ENCODE measurements at regions of chr2 and their contacts with region 1.

Region 1: DNA sequence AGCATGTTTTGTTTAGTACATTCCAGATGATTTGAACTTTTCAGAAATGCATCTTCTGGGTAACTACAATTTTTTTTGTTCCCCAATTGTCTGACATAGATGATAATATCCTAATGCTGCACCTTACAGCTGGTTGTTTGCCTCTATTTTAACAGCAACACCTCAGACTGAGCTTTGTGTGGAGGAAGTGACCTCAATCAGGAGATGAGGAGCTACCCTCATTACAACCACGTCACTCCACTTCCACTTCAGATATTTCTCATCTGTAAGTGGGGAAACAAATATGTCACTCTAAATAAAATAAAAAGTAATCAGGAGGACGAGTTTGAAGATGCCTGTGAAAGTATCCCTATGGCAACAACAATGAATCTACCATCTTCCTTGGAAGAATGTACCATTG is 12.1 kb upstream of the SRSF7 start:
- DNase-seq: no peak
- H3K27ac ChIP-seq: no peak overlapping the region
- CTCF ChIP-seq: no peak

Region 2: DNA sequence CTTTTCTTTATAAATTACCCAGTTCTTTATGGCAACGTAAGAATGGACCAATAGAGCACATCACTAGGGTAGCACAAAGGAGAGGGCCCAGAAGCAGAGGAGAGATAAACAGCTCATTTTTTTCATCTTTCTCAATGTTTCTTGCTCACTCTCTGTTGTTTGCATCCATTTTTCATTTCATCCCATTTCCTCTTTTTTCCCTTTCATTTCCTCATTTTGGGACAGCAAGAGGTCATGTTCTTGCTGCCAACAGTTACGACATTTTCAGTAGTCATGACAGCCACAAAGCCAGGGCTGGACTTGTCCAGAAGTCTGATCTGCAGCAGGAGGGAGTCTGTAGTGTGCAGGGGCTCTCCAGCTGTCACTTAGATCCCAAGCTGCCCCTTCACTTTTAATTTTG is 634.6 kb before region 1 on chr2:
- CTCF ChIA-PET with region 1: no interaction called
- POLR2A ChIA-PET with region 1: no interaction called
- DNase-seq: no peak
- H3K27ac ChIP-seq: no peak overlapping the region
- CTCF ChIP-seq: no peak

Region 3: GRCh38 chr2:38778687-38779082 is 15.5 kb after region 1 on chr2:
- CTCF ChIA-PET with region 1: interaction called, 3 read pairs
- POLR2A ChIA-PET with region 1: interaction called, 11 read pairs
- DNase-seq: no peak
- H3K27ac ChIP-seq: peak overlapping the region; percentile 65
- CTCF ChIP-seq: no peak

Measured in RWPE1 (cell line).